GM12878 (cell line): ENCODE measurements at regions of chr4 and their contacts with region 1.

Region 1: DNA sequence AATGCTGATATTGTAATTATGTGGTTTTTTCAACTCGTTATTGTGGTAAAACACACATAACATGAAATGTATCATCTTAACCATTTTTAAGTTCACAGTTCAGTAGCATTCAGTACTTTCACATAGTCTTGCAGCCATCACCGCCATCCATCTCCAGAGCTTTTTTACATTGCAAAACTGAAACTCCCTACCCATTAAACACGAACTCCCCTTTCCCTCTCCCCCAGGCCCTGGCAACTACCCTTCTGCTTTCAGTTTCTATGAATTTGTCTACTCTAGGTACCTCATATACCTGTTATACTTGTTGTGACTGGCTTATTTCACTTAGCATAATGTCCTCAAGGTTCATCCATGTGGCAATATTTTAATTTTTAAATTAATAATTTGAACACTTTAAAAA is 380.6 kb downstream of the MAPK10 start:
- DNase-seq: peak; percentile 30
- ATAC-seq: peak; percentile 92
- H3K4me3 ChIP-seq: no peak overlapping the region
- H3K27ac ChIP-seq: no peak overlapping the region
- H3K4me1 ChIP-seq: no peaks in the 10 kb centered on the region
- H3K27me3 ChIP-seq: no peaks in the 10 kb centered on the region; a peak in 1 of 4 replicates
- CTCF ChIP-seq: no peak
- EP300 ChIP-seq: no peak
- POLR2A ChIP-seq: no peak
- RAD21 ChIP-seq: no peak

Region 2: GRCh38 chr4:85756938-85757337 is 222.3 kb before region 1 on chr4:
- CTCF ChIA-PET with region 1: no interaction called
- POLR2A ChIA-PET with region 1: no interaction called
- RAD21 ChIA-PET with region 1: no interaction called
- SMC1A ChIA-PET with region 1: no interaction called
- in situ Hi-C with region 1: loop called (anchors 10 kb)
- intact Hi-C with region 1: no loop called
- DNase-seq: no peak
- ATAC-seq: peak; percentile 79
- H3K4me3 ChIP-seq: no peak overlapping the region
- H3K27ac ChIP-seq: no peak overlapping the region
- H3K4me1 ChIP-seq: no peaks in the 10 kb centered on the region
- H3K27me3 ChIP-seq: no peaks in the 10 kb centered on the region
- CTCF ChIP-seq: peak; percentile 49 to 60 (median 50); a peak in 5 of 6 replicates
- EP300 ChIP-seq: no peak
- POLR2A ChIP-seq: no peak
- RAD21 ChIP-seq: peak; percentile 71

Region 3: DNA sequence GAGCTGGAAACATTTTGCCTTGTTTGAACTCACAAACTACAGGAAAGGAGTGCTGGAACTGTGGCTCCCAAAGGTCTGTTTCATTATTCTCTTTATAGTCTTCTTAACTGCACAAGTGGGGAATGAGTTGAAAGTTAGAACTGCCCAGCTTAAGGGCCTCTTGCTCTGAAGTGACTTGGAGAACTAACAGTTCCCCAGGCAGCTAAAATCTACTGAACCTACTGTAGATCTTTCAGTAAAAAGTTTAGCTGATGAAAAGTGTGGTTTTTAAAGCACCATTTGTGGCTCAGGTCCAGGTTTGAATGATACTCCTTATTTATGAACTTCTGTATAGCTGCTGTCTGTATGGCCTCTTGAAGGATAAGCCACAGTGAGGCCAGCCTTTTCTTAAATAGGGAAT is 26.8 kb after region 1 on chr4:
- CTCF ChIA-PET with region 1: no interaction called
- POLR2A ChIA-PET with region 1: no interaction called
- RAD21 ChIA-PET with region 1: no interaction called
- SMC1A ChIA-PET with region 1: no interaction called
- in situ Hi-C with region 1: no loop called
- intact Hi-C with region 1: no loop called
- DNase-seq: no peak
- ATAC-seq: no peak
- H3K4me3 ChIP-seq: no peak overlapping the region
- H3K27ac ChIP-seq: no peak overlapping the region
- H3K4me1 ChIP-seq: no peaks in the 10 kb centered on the region
- H3K27me3 ChIP-seq: no peaks in the 10 kb centered on the region
- CTCF ChIP-seq: no peak
- EP300 ChIP-seq: no peak
- POLR2A ChIP-seq: no peak
- RAD21 ChIP-seq: no peak